ENCODE measurements at regions of chr6 and their contacts with region 1.

Region 1: DNA sequence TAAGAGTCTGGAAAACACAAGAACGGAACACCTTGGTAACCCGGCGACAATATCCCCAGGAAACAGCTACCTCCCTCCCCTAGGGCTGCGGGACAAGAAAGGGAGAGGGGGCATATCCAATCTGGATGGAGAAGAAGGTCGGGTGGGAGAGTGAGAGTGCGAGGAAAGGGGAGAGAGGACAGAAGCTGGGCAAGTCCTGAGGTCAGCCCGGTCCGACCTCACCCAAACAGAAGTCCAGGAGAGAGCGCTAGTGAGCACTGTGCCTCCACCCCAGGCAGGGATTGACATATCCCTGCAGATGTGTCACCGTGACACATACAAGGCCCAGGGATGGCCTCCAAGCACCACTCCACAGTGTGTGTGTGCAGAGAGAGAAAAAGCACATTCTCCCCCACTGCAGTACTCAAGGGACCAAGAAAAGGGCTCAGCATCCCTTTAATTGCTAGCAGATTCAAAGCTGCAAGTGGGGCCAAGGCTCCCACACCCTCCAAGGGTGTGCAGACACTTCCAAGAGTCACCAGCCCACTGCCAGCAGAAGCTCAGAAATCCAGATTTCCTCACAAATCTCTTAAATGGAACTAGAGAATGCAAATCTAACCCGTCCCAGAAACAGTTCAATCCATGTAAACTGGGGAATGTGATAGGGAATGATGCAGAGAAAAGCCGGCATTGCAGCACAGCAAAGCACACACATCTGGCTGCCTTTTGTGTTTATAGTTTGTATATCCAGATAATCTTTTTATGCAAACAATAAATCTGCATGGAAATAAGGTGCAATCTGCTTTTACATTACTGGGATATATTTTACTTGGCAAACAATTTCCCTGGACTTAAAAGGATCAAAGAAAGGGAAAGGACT is 3.1 kb downstream of the PXDC1 start:
- DNase-seq: peak; percentile 79 to 87 (median 80)
- ATAC-seq: peak; percentile 93
- H3K4me3 ChIP-seq: no peak overlapping the region
- H3K27ac ChIP-seq: no peak overlapping the region
- H3K4me1 ChIP-seq: peaks cover 5 to 26% of the 10 kb centered on the region in 2 experiments; a peak in 4 of 5 replicates
- H3K27me3 ChIP-seq: peaks cover 31 to 84% of the 10 kb centered on the region in 2 experiments; a peak in 4 of 5 replicates
- CTCF ChIP-seq: peak; percentile 82 to 86 (median 85)
- EP300 ChIP-seq: no peak
- POLR2A ChIP-seq: no peak
- RAD21 ChIP-seq: peak; percentile 78 to 89

Region 2: GRCh38 chr6:3825851-3826581 is 77.6 kb after region 1 on chr6:
- CTCF ChIA-PET with region 1: interaction called, 4 read pairs
- POLR2A ChIA-PET with region 1: no interaction called
- in situ Hi-C with region 1: no loop called
- intact Hi-C with region 1: loop called (anchors 1 kb)
- DNase-seq: no peak
- ATAC-seq: no peak
- H3K4me3 ChIP-seq: no peak overlapping the region
- H3K27ac ChIP-seq: no peak overlapping the region
- H3K4me1 ChIP-seq: no peaks in the 10 kb centered on the region
- H3K27me3 ChIP-seq: peaks cover 46 to 78% of the 10 kb centered on the region in 2 experiments
- CTCF ChIP-seq: no peak
- EP300 ChIP-seq: no peak
- POLR2A ChIP-seq: no peak
- RAD21 ChIP-seq: no peak

Region 3: DNA sequence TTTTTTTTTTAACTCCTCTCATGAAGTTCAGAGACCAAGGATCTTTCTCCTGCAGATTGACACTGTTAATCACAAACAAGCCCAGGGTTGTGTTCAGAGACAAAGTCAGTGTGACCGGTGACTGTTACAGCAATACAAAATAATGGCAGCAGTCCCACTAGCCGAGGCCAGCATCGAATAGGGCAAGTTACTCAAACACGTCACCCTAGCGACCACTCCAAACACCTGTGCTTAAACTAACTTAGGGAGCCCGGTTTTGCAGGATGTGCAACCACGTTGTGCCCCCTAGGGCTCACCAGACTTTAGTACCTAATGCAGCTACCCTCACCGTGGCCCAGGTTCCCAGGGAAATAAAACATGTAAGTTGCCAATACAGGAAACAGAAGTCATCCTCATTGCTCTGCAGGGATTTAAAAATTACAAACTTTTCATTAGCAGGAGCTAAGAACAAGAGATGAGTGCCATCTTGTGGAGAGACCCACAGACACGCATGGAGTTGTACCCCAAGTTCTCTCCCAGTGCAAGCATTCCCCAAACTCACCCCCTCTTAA is 138.8 kb after region 1 on chr6:
- CTCF ChIA-PET with region 1: no interaction called
- POLR2A ChIA-PET with region 1: no interaction called
- in situ Hi-C with region 1: no loop called
- intact Hi-C with region 1: loop called (anchors 5 kb)
- DNase-seq: no peak
- ATAC-seq: no peak
- H3K4me3 ChIP-seq: no peak overlapping the region
- H3K27ac ChIP-seq: no peak overlapping the region
- H3K4me1 ChIP-seq: no peaks in the 10 kb centered on the region
- H3K27me3 ChIP-seq: peaks cover 17 to 46% of the 10 kb centered on the region in 2 experiments
- CTCF ChIP-seq: peak; percentile 10 to 36 (median 23); a peak in 1 of 6 replicates
- EP300 ChIP-seq: no peak
- POLR2A ChIP-seq: no peak
- RAD21 ChIP-seq: peak in 1 of 2 experiments; percentile 28; a peak in 2 of 4 replicates

Region 4: DNA sequence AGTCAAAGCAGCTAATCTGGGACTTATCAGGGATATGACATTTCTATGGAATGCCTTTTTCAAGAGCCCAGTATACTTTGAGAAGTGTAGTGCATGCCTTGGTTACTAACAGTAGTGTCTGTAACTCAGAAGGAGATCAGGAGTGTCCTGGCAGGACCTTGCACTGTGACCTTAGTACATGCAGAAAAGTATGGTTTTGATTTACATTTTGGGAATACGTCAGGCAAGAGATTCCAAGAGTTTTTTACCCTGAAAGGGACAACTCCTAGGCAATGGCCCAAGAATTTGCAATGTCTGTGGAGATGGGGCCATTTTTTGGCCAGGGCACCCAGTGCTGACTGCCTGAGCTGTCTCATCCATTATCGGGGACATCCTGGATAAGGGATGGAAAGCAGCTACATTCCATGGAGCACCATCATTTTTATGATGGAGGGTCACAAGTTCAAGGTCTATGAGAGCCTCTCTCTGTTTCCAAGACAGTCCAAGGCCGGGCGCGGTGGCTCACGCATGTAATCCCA is 180.9 kb after region 1 on chr6:
- CTCF ChIA-PET with region 1: interaction called, 3 read pairs
- POLR2A ChIA-PET with region 1: no interaction called
- in situ Hi-C with region 1: loop called (anchors 5 kb)
- intact Hi-C with region 1: loop called (anchors 1 kb)
- DNase-seq: no peak
- ATAC-seq: no peak
- H3K4me3 ChIP-seq: no peak overlapping the region
- H3K27ac ChIP-seq: no peak overlapping the region
- H3K4me1 ChIP-seq: peaks cover 0 to 1% of the 10 kb centered on the region in 2 experiments; a peak in 1 of 5 replicates
- H3K27me3 ChIP-seq: peaks cover 2 to 7% of the 10 kb centered on the region in 2 experiments; a peak in 4 of 5 replicates
- CTCF ChIP-seq: no peak
- EP300 ChIP-seq: no peak
- POLR2A ChIP-seq: no peak
- RAD21 ChIP-seq: no peak

Region 5: GRCh38 chr6:3990692-3991501 is 242.5 kb after region 1 on chr6:
- CTCF ChIA-PET with region 1: interaction called, 22 read pairs
- POLR2A ChIA-PET with region 1: no interaction called
- in situ Hi-C with region 1: loop called (anchors 5 kb)
- intact Hi-C with region 1: loop called (anchors 5 kb)
- DNase-seq: peak; percentile 82 to 88 (median 86)
- ATAC-seq: peak; percentile 99
- H3K4me3 ChIP-seq: no peak overlapping the region
- H3K27ac ChIP-seq: no peak overlapping the region
- H3K4me1 ChIP-seq: no peaks in the 10 kb centered on the region; a peak in 1 of 5 replicates
- H3K27me3 ChIP-seq: no peaks in the 10 kb centered on the region
- CTCF ChIP-seq: peak; percentile 89 to 96 (median 94)
- EP300 ChIP-seq: no peak
- POLR2A ChIP-seq: no peak
- RAD21 ChIP-seq: peak; percentile 70 to 87

Region 6: DNA sequence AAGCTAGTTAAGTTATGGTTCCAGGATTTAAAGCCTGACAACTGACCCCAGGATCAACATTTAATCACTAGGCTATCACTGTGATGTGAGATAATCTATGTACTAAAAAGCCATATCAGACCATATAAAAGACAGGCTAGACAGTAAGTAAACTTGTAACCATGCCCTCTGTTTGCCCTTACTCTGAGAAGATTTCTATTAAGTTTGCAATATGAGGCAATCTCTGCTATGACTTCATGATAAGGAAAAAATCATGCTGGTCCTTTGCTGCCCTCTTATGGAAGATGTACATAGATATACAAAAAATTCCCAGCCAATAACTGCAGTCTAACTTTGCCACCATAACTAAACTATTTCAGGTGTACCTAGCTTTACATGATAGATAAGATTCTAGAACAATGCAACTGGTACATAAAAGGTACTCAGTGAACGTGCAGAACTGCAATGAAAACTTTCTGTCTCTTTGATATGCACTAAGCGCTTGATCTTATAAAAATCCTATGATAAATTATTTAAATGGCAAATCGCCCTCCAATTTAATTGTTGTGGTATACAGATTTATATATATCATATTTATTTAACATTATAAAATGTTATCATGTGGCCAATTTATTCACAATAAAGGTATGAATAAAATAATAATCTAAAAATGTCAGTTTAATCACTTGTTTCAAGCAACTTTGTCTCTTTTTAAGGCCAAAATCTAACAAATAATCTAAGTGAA is 260.0 kb after region 1 on chr6:
- CTCF ChIA-PET with region 1: interaction called, 22 read pairs
- POLR2A ChIA-PET with region 1: no interaction called
- in situ Hi-C with region 1: no loop called
- intact Hi-C with region 1: loop called (anchors 5 kb)
- DNase-seq: peak in 3 of 4 experiments; percentile 24 to 50 (median 38)
- ATAC-seq: peak; percentile 58
- H3K4me3 ChIP-seq: no peak overlapping the region
- H3K27ac ChIP-seq: no peak overlapping the region; the same call in 2 of the 3 replicates
- H3K4me1 ChIP-seq: peaks cover 0 to 9% of the 10 kb centered on the region in 2 experiments; a peak in 3 of 5 replicates
- H3K27me3 ChIP-seq: no peaks in the 10 kb centered on the region
- CTCF ChIP-seq: peak; percentile 38 to 72 (median 45); a peak in 4 of 6 replicates
- EP300 ChIP-seq: peak; percentile 53; the same call in 1 of the 2 replicates
- POLR2A ChIP-seq: no peak
- RAD21 ChIP-seq: peak; percentile 69 to 74